Activated T-helper 1 cell treated with anti-CD3 and anti-CD28 coated beads, Interleukin-12 subunit alpha, Interleukin-12 subunit beta, Interleukin-2, Interleukin-4 antibody, amounts not matched to agents 30 ng/mL and 10 ng/mL and 1 ng/mL, durations not matched to agents 14 hours and 24 hours and 36 hours (primary cell): ENCODE measurements at regions of chr7 and their contacts with region 1.

Region 1: DNA sequence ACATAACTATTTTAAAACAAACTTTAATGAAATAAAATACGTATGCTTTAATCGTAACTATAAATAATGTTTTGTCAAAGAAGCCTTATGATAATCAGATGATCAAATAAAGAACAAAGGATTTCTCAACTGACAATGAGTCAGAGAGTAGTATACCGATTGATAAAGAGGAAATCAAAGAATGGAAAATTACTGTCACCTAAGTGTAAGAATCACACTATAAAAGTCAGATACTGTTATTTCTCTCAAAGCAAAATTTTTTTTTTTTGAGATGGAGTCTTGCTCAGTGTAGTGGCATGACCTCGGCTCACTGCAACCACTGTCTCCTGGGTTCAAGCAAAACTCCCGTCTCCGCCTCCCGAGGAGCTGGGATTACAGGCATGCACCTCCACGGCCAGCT is 18.8 kb downstream of the DNAJC2 start:
- DNase-seq: no peak
- H3K4me3 Mint-ChIP-seq: no peak overlapping the region
- H3K27ac Mint-ChIP-seq: no peak overlapping the region
- H3K4me1 Mint-ChIP-seq: peaks cover 14% of the 10 kb centered on the region
- H3K27me3 Mint-ChIP-seq: no peaks in the 10 kb centered on the region

Region 2: DNA sequence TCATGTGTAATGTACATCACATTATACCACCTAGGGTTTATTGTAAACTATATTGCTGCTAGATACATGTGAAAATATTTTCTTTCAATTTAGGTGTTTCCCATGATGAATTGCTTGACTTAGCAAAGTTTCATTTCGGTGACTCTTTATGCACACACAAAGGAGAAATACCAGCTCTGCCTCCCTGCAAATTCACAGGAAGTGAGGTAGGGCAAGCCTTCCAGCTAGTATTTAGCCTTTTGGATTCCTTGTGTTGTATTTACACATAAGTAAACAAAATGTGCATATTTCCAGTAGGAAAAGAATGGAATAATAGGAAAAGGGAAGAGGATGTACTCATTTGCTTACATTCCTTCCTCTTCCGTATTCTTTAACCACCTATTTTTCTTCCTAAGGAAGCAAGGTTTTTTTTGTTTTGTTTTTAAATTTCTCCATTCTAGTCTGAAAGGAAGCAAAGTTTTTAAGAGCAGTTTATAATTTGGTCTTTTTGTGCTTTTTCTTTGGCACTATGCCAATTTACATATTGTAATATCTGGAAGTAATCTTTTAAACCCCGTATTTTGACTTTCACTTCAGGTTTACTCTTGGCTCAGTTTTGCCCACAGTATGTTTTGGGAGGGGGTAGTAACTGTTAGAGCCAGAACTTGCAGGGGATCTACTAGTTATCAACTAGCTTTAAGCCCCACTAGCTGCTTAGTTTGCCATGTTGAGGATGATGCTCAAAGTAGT is 18.1 kb before region 1 on chr7:
- intact Hi-C with region 1: loop called (anchors 2 kb)
- DNase-seq: no peak
- H3K4me3 Mint-ChIP-seq: no peak overlapping the region
- H3K27ac Mint-ChIP-seq: peak overlapping the region; percentile 12
- H3K4me1 Mint-ChIP-seq: peaks cover 10% of the 10 kb centered on the region
- H3K27me3 Mint-ChIP-seq: no peaks in the 10 kb centered on the region

Region 3: DNA sequence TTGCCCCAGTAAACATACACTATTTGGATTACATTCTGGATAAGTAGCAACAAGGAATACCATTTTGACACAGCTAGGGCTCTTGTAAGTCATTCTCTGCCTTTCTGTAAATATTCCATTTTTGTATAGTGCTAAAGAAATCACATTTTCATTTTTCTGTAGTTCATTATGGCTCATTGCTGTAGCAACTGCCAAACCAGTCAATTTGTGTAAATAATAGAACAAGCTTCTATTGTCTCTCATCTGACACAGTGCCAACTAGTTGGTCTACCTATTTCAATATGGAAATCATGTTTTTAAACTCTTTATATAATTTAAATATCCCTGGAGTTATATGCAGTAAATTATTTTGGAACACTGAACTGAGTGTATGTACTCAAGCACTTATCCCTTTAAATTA is 470.0 kb after region 1 on chr7:
- intact Hi-C with region 1: no loop called
- DNase-seq: no peak
- H3K4me3 Mint-ChIP-seq: no peak overlapping the region
- H3K27ac Mint-ChIP-seq: no peak overlapping the region
- H3K4me1 Mint-ChIP-seq: no peaks in the 10 kb centered on the region
- H3K27me3 Mint-ChIP-seq: no peaks in the 10 kb centered on the region